Esophagus muscularis mucosa (tissue), 4 donors: ENCODE measurements at regions of chr16 and their contacts with region 1.

Region 1: GRCh38 chr16:19179546-19180490 is 11.8 kb downstream of the SYT17 start:
- DNase-seq: no peak
- H3K4me3 ChIP-seq: no peak overlapping the region
- H3K27ac ChIP-seq: no peak overlapping the region
- H3K4me1 ChIP-seq: peaks cover 0 to 5% (median 0%) of the 10 kb centered on the region in 4 donors
- H3K27me3 ChIP-seq: no peaks in the 10 kb centered on the region
- CTCF ChIP-seq: peak; percentile 42 to 54 (median 42)
- EP300 ChIP-seq: no peak
- POLR2A ChIP-seq: no peak

Region 2: GRCh38 chr16:19130852-19131810 is 48.7 kb before region 1 on chr16:
- intact Hi-C with region 1: no loop called
- DNase-seq: no peak
- H3K4me3 ChIP-seq: peak overlapping the region in 3 of 4 donors; percentile 6 to 26 (median 23)
- H3K27ac ChIP-seq: peak overlapping the region; percentile 45 to 76 (median 72)
- H3K4me1 ChIP-seq: peaks cover 29 to 34% (median 33%) of the 10 kb centered on the region in 4 donors
- H3K27me3 ChIP-seq: no peaks in the 10 kb centered on the region
- CTCF ChIP-seq: no peak
- EP300 ChIP-seq: no peak
- POLR2A ChIP-seq: no peak

Region 3: GRCh38 chr16:19223235-19224170 is 43.7 kb after region 1 on chr16:
- intact Hi-C with region 1: loop called (anchors 10 kb)
- DNase-seq: no peak
- H3K4me3 ChIP-seq: no peak overlapping the region
- H3K27ac ChIP-seq: no peak overlapping the region
- H3K4me1 ChIP-seq: peaks cover 0 to 35% (median 33%) of the 10 kb centered on the region in 4 donors
- H3K27me3 ChIP-seq: no peaks in the 10 kb centered on the region
- CTCF ChIP-seq: peak; percentile 32 to 64 (median 39)
- EP300 ChIP-seq: no peak
- POLR2A ChIP-seq: no peak

Region 4: GRCh38 chr16:19294156-19294649 is 114.4 kb after region 1 on chr16:
- intact Hi-C with region 1: no loop called
- DNase-seq: no peak
- H3K4me3 ChIP-seq: no peak overlapping the region
- H3K27ac ChIP-seq: no peak overlapping the region
- H3K4me1 ChIP-seq: peaks cover 0 to 17% (median 3%) of the 10 kb centered on the region in 4 donors
- H3K27me3 ChIP-seq: no peaks in the 10 kb centered on the region
- CTCF ChIP-seq: no peak
- EP300 ChIP-seq: no peak
- POLR2A ChIP-seq: no peak

Region 5: GRCh38 chr16:19644877-19645276 is 465.1 kb after region 1 on chr16:
- intact Hi-C with region 1: no loop called
- DNase-seq: no peak
- H3K4me3 ChIP-seq: peak overlapping the region; percentile 6 to 25 (median 23)
- H3K27ac ChIP-seq: peak overlapping the region; percentile 73 to 78 (median 74)
- H3K4me1 ChIP-seq: peaks cover 12 to 39% (median 30%) of the 10 kb centered on the region in 4 donors
- H3K27me3 ChIP-seq: no peaks in the 10 kb centered on the region
- CTCF ChIP-seq: no peak
- EP300 ChIP-seq: no peak
- POLR2A ChIP-seq: no peak